AG04450 (cell line): ENCODE measurements at regions of chr3 and their contacts with region 1.

Region 1: DNA sequence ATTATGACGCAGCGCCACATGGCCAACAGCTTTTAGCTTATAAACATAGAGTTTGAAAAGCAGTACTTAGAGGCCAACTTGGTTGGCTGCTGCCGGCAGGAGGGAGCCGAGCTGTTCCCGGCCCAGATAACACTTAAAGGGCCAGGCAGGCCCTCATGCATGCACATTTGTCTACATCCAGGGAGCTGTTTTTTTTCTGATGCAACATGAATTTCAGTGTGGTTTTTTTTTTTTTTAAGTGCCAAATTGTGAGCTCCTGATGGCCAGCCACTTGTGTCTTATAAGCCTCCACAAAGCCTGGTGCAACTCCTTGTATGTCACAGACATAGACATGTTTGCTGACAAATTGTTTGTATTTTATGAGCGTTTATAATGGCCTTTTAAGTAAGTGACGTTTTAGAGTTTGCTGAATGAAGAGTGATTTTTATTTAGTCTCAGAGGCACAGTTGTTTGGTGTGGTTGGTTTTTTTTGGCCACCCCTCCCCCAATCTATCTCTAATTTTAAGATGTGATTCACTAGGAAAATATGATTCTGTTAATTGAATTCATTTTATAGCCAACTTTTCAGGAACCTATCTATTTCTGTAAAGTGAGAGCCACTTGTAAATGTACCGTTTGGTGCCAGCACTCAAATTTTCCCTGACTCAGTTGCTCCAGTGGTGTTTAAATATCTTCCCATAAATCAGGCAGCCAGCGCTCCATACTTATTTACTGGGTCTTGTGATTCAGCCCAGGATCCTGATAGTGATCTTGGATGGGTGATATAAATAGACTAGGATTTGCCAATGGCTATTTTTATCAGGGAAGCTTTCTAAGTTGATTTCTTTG is 134.3 kb downstream of the VGLL4 start:
- DNase-seq: peak; percentile 93
- H3K4me3 ChIP-seq: no peak overlapping the region
- H3K27ac ChIP-seq: peak overlapping the region; percentile 87
- H3K27me3 ChIP-seq: no peaks in the 10 kb centered on the region
- CTCF ChIP-seq: peak; percentile 40

Region 2: GRCh38 chr3:11498646-11499045 is 10.7 kb before region 1 on chr3:
- CTCF ChIA-PET with region 1: no interaction called
- POLR2A ChIA-PET with region 1: interaction called, 20 read pairs
- DNase-seq: no peak
- H3K4me3 ChIP-seq: no peak overlapping the region
- H3K27ac ChIP-seq: peak overlapping the region; percentile 81
- H3K27me3 ChIP-seq: no peaks in the 10 kb centered on the region
- CTCF ChIP-seq: no peak

Region 3: DNA sequence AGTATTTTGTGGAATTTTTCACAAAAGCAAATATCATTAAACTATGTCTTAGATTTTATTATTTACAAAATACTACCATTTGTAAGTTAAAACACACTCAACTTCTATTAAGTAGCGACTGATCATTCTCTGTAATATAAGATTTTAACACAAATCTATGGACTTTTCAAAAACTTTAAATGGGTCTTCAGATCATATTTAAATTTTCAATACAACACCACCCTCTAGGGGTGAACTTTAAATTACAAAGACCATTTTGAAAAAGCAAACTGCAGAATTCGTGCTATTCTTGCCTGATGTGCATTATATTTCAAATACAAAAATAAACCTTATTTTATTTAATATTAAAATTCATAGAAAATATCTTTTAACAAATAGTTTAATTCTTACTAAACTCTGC is 142.5 kb after region 1 on chr3:
- CTCF ChIA-PET with region 1: interaction called, 17 read pairs
- POLR2A ChIA-PET with region 1: no interaction called
- DNase-seq: no peak
- H3K4me3 ChIP-seq: no peak overlapping the region
- H3K27ac ChIP-seq: no peak overlapping the region
- H3K27me3 ChIP-seq: no peaks in the 10 kb centered on the region
- CTCF ChIP-seq: peak; percentile 46